Caco-2 (cell line): ENCODE measurements at regions of chr15 and their contacts with region 1.

Region 1: GRCh38 chr15:67150028-67150860 is 84.8 kb downstream of the SMAD3 start:
- DNase-seq: peak; percentile 71 to 81
- H3K4me3 ChIP-seq: peak overlapping the region; percentile 17
- H3K4me3 Mint-ChIP-seq: peak overlapping the region; percentile 72
- H3K27ac Mint-ChIP-seq: peak overlapping the region; percentile 78
- H3K4me1 ChIP-seq: peaks cover 62% of the 10 kb centered on the region
- H3K4me1 Mint-ChIP-seq: peaks cover 41% of the 10 kb centered on the region
- H3K27me3 ChIP-seq: no peaks in the 10 kb centered on the region
- H3K27me3 Mint-ChIP-seq: no peaks in the 10 kb centered on the region
- CTCF ChIP-seq: no peak

Region 2: DNA sequence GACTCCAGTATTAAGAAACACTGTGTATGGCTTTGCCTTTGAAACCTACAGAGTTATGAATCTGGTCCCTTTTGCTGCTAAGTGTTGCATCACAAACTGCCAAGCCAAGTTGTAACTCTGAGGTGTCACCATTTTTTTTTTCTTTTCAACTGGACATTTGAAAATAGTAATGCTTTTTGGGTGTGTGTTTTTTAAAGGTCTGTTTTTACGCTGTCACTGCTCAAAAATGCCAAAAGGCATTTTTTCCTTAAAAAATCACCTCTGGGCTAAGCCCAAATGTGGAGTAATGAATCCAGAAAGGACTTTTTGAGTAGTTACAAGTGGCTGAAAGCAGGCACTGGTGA is 75.4 kb before region 1 on chr15:
- CTCF ChIA-PET with region 1: no interaction called
- POLR2A ChIA-PET with region 1: no interaction called
- intact Hi-C with region 1: loop called (anchors 2 kb)
- DNase-seq: no peak
- H3K4me3 ChIP-seq: no peak overlapping the region
- H3K4me3 Mint-ChIP-seq: no peak overlapping the region
- H3K27ac Mint-ChIP-seq: no peak overlapping the region
- H3K4me1 ChIP-seq: peaks cover 18% of the 10 kb centered on the region
- H3K4me1 Mint-ChIP-seq: peaks cover 31% of the 10 kb centered on the region
- H3K27me3 ChIP-seq: no peaks in the 10 kb centered on the region
- H3K27me3 Mint-ChIP-seq: no peaks in the 10 kb centered on the region
- CTCF ChIP-seq: no peak

Region 3: GRCh38 chr15:67135497-67135893 is 14.7 kb before region 1 on chr15:
- CTCF ChIA-PET with region 1: interaction called, 5 read pairs
- POLR2A ChIA-PET with region 1: no interaction called
- intact Hi-C with region 1: loop called (anchors 1 kb)
- DNase-seq: peak; percentile 71 to 73
- H3K4me3 ChIP-seq: no peak overlapping the region
- H3K4me3 Mint-ChIP-seq: peak overlapping the region; percentile 49
- H3K27ac Mint-ChIP-seq: peak overlapping the region; percentile 91
- H3K4me1 ChIP-seq: peaks cover 84% of the 10 kb centered on the region
- H3K4me1 Mint-ChIP-seq: peaks cover 78% of the 10 kb centered on the region
- H3K27me3 ChIP-seq: no peaks in the 10 kb centered on the region
- H3K27me3 Mint-ChIP-seq: no peaks in the 10 kb centered on the region
- CTCF ChIP-seq: peak in 1 of 2 experiments; percentile 50

Region 4: DNA sequence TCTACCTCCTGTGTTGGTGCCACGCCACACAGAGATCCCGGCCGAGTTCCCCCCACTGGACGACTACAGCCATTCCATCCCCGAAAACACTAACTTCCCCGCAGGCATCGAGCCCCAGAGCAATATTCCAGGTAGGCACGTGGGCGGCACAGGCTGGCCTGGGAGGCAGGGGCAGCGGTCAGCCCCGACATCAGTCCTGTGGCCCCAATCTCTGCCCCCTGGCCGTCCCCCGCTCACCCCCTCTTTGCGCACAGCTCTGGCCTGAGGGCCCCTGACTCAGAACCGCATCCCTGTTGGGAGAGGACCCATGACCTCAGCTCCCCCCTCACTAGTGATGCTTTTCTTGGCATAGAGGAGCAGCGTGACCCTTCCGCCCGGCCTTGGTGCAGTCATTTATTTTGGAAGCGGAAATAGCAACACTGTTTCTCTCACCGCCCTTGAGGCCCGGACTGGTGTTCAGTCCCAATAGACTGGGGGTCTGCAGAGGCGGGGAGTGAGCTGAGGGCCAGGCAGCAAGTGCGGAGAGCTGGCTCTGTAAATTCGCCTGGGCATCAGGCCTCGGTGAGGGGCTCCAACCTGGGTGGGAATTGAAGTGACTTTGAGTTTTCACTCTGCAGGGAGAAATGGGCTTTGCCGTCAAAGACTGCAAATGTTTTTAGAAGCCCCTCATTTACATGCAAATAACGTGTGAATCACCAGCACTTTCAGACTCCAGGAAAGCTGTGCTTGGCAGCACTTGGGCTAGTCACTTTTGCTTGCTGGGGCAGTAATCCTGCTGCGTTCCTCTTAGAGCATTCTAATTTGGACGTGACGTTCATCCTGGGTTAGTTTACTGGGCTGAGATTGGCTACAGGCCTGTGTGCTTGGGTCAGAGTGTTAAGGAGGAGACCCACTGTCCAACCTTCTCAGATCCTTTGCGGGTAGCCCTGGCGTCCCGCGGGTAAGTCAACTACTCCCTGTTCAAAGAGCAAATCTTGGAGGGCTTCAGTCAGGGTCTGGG is 15.3 kb after region 1 on chr15:
- CTCF ChIA-PET with region 1: no interaction called
- POLR2A ChIA-PET with region 1: interaction called, 12 read pairs
- intact Hi-C with region 1: no loop called
- DNase-seq: no peak
- H3K4me3 ChIP-seq: no peak overlapping the region
- H3K4me3 Mint-ChIP-seq: no peak overlapping the region
- H3K27ac Mint-ChIP-seq: peak overlapping the region; percentile 32
- H3K4me1 ChIP-seq: no peaks in the 10 kb centered on the region
- H3K4me1 Mint-ChIP-seq: peaks cover 7% of the 10 kb centered on the region
- H3K27me3 ChIP-seq: no peaks in the 10 kb centered on the region
- H3K27me3 Mint-ChIP-seq: no peaks in the 10 kb centered on the region
- CTCF ChIP-seq: no peak

Region 5: DNA sequence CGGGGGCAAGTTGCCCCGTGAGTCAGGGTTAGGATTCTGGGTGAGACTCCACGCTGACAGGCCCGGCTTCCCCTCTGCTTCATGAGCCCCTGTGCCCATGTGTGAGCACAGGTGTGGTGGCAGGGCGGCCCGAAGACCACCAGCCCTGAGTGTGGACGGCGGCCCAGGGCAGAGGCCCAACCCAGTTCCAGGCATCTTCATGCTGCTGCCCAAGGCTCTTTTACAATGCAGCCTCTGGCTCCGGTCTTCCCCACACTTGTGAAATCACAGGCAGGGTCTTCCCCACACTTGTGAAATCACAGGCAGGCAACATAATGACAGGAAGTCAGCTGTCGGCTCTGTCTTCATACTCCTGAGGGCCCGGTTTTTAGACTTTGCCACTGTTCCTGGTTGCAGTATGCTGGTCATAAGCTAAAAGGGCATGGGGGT is 25.4 kb after region 1 on chr15:
- CTCF ChIA-PET with region 1: interaction called, 5 read pairs
- POLR2A ChIA-PET with region 1: no interaction called
- intact Hi-C with region 1: loop called (anchors 1 kb)
- DNase-seq: no peak
- H3K4me3 ChIP-seq: no peak overlapping the region
- H3K4me3 Mint-ChIP-seq: no peak overlapping the region
- H3K27ac Mint-ChIP-seq: peak overlapping the region; percentile 26
- H3K4me1 ChIP-seq: peaks cover 53% of the 10 kb centered on the region
- H3K4me1 Mint-ChIP-seq: peaks cover 51% of the 10 kb centered on the region
- H3K27me3 ChIP-seq: no peaks in the 10 kb centered on the region
- H3K27me3 Mint-ChIP-seq: no peaks in the 10 kb centered on the region
- CTCF ChIP-seq: no peak

Region 6: GRCh38 chr15:67601073-67601472 is 450.8 kb after region 1 on chr15:
- CTCF ChIA-PET with region 1: no interaction called
- POLR2A ChIA-PET with region 1: no interaction called
- intact Hi-C with region 1: no loop called
- DNase-seq: no peak
- H3K4me3 ChIP-seq: no peak overlapping the region
- H3K4me3 Mint-ChIP-seq: no peak overlapping the region
- H3K27ac Mint-ChIP-seq: no peak overlapping the region
- H3K4me1 ChIP-seq: no peaks in the 10 kb centered on the region
- H3K4me1 Mint-ChIP-seq: no peaks in the 10 kb centered on the region
- H3K27me3 ChIP-seq: no peaks in the 10 kb centered on the region
- H3K27me3 Mint-ChIP-seq: no peaks in the 10 kb centered on the region
- CTCF ChIP-seq: no peak